ENCODE measurements at regions of chr9 and their contacts with region 1.

Region 1: GRCh38 chr9:113401027-113401792 is at the start of gene ALAD:
- DNase-seq: peak; percentile 98 to 100 (median 99)
- ATAC-seq: peak; percentile 98
- H3K4me3 ChIP-seq: peak within 1 kb of the TSS; percentile 98
- H3K4me3 Mint-ChIP-seq: peak within 1 kb of the TSS; percentile 98
- H3K27ac ChIP-seq: peak within 1 kb of the TSS; percentile 50 to 54
- H3K27ac Mint-ChIP-seq: peak within 1 kb of the TSS; percentile 86
- H3K4me1 ChIP-seq: peaks cover 33% of the 10 kb centered on the region
- H3K4me1 Mint-ChIP-seq: peaks cover 34% of the 10 kb centered on the region
- H3K27me3 ChIP-seq: no peaks in the 10 kb centered on the region
- H3K27me3 Mint-ChIP-seq: no peaks in the 10 kb centered on the region
- CTCF ChIP-seq: peak; percentile 93
- total RNA-seq, gene ALAD: 14.5 to 15.0 TPM

Region 2: GRCh38 chr9:113150670-113151611 is 250.3 kb before region 1 on chr9 and contains the start of gene SLC31A2:
- CTCF ChIA-PET with region 1: no interaction called
- POLR2A ChIA-PET with region 1: no interaction called
- intact Hi-C with region 1: loop called in 1 of 2 experiments (anchors 10 kb)
- DNase-seq: peak; percentile 68 to 92 (median 81)
- ATAC-seq: peak; percentile 95
- H3K4me3 ChIP-seq: peak within 1 kb of the TSS; percentile 90
- H3K4me3 Mint-ChIP-seq: peak within 1 kb of the TSS; percentile 88
- H3K27ac ChIP-seq: peak within 1 kb of the TSS; percentile 55 to 56
- H3K27ac Mint-ChIP-seq: peak within 1 kb of the TSS; percentile 53
- H3K4me1 ChIP-seq: peaks cover 25% of the 10 kb centered on the region
- H3K4me1 Mint-ChIP-seq: peaks cover 35% of the 10 kb centered on the region
- H3K27me3 ChIP-seq: peaks cover 2% of the 10 kb centered on the region in 2 experiments
- H3K27me3 Mint-ChIP-seq: peaks cover 6% of the 10 kb centered on the region
- CTCF ChIP-seq: peak; percentile 61
- total RNA-seq, gene SLC31A2: 4.8 to 5.4 TPM

Region 3: GRCh38 chr9:113267911-113268566 is 133.2 kb before region 1 on chr9:
- CTCF ChIA-PET with region 1: no interaction called
- POLR2A ChIA-PET with region 1: no interaction called
- intact Hi-C with region 1: no loop called
- DNase-seq: no peak
- ATAC-seq: no peak
- H3K4me3 ChIP-seq: no peak overlapping the region
- H3K4me3 Mint-ChIP-seq: no peak overlapping the region
- H3K27ac ChIP-seq: no peak overlapping the region
- H3K27ac Mint-ChIP-seq: no peak overlapping the region
- H3K4me1 ChIP-seq: no peaks in the 10 kb centered on the region
- H3K4me1 Mint-ChIP-seq: peaks cover 18% of the 10 kb centered on the region
- H3K27me3 ChIP-seq: no peaks in the 10 kb centered on the region
- H3K27me3 Mint-ChIP-seq: no peaks in the 10 kb centered on the region
- CTCF ChIP-seq: no peak

Region 4: DNA sequence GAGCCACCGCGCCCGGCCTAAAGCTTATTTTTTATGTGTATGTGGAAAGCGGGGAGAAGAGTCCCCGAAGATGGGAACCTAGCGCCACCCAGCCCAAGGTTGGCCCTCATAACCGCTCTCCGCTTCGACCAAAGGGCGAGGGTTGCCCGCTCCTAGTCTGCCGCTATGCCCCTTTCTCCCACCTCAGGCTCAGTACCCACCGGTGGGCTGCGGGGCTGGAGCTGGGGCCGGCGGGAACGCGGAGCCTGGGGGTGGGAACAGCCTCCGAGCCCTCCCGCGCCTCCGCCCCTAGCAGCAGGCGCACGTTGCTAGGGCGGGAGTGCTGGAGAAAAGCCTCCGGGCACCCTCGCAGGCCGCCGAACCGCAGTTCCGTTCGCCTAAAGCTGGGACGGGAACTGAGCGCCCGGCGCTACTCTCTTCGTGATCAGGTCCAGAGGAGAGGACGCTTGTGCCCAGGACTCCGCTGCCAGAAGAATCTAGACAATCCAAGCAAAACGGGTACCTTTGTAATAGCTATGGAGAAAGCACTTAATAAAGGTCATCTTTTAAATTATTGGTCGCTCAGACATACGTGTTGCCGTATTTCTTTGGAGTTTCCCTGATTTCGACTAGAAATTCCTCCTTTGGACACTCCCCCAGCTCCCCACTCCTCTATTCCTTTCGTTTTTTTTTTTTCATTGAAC is 61.1 kb before region 1 on chr9 and contains the start of gene WDR31:
- CTCF ChIA-PET with region 1: interaction called, 12 read pairs
- POLR2A ChIA-PET with region 1: interaction called, 3 read pairs
- intact Hi-C with region 1: loop called (anchors 2 to 10 kb)
- DNase-seq: peak; percentile 56 to 88 (median 74)
- ATAC-seq: peak; percentile 99
- H3K4me3 ChIP-seq: peak within 1 kb of the TSS; percentile 82
- H3K4me3 Mint-ChIP-seq: peak within 1 kb of the TSS; percentile 91
- H3K27ac ChIP-seq: no peak within 1 kb of the TSS
- H3K27ac Mint-ChIP-seq: peak within 1 kb of the TSS; percentile 14
- H3K4me1 ChIP-seq: peaks cover 18% of the 10 kb centered on the region
- H3K4me1 Mint-ChIP-seq: peaks cover 25% of the 10 kb centered on the region
- H3K27me3 ChIP-seq: no peaks in the 10 kb centered on the region
- H3K27me3 Mint-ChIP-seq: peaks cover 11% of the 10 kb centered on the region
- CTCF ChIP-seq: no peak
- total RNA-seq, gene WDR31: 0.14 to 0.22 TPM

Region 5: DNA sequence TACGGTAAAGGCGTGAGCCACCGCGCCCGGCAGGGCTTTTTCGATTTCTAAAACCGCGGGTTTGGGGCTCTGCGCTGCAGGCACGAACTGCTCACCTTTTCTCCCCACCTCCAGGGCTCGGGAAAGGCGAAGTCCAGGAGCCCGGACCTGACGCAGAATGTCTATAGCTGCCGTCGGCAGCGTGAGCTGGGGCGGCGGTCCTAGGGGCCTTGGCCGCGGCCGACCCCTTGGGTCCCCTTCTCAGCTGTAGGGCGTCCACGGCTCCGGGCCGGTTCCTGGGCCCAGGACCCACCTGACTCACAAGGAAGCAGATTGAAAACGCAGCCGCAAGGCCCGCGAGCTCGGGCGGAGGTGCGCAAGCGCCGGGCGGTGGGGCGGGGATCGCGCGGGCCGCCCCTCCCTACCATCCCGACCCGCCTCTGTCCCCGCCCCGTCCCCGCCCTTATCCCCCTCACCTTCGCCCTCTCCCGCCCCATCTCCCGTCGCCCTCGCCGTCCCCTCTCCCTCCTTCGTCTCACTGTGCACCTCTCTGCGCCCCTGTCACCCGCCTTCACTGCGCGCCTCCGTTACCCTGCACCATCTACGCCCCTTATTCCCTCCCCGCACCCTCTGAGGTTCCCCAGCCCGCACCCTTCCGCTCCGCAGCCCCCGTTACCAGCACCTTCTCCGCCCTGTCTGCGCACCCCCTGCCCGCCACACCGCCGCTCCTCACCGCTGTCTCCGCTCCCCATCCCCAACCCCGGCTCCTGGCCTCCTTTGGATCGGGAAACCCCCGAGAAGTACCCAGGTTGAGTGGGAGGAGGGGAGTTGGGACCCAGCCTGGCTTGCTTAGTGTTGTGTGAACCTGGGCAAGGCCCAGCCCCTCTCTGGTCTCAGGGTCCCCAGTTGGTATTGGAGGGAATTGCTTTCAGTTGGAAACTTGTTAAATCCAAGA is 24.3 kb before region 1 on chr9 and contains the start of gene HDHD3:
- CTCF ChIA-PET with region 1: interaction called, 8 read pairs
- POLR2A ChIA-PET with region 1: interaction called, 8 read pairs
- intact Hi-C with region 1: loop called in 1 of 2 experiments (anchors 1 kb)
- DNase-seq: peak; percentile 50 to 93 (median 76)
- ATAC-seq: peak; percentile 88
- H3K4me3 ChIP-seq: peak within 1 kb of the TSS; percentile 96
- H3K4me3 Mint-ChIP-seq: peak within 1 kb of the TSS; percentile 87
- H3K27ac ChIP-seq: peak within 1 kb of the TSS; percentile 59 to 65
- H3K27ac Mint-ChIP-seq: peak within 1 kb of the TSS; percentile 90
- H3K4me1 ChIP-seq: peaks cover 23% of the 10 kb centered on the region
- H3K4me1 Mint-ChIP-seq: peaks cover 21% of the 10 kb centered on the region
- H3K27me3 ChIP-seq: no peaks in the 10 kb centered on the region
- H3K27me3 Mint-ChIP-seq: no peaks in the 10 kb centered on the region
- CTCF ChIP-seq: no peak
- total RNA-seq, gene HDHD3: 12.8 to 13.2 TPM

Region 6: GRCh38 chr9:113541019-113541900 is 140.1 kb after region 1 on chr9:
- CTCF ChIA-PET with region 1: no interaction called
- POLR2A ChIA-PET with region 1: no interaction called
- intact Hi-C with region 1: no loop called
- DNase-seq: no peak
- ATAC-seq: no peak
- H3K4me3 ChIP-seq: no peak overlapping the region
- H3K4me3 Mint-ChIP-seq: no peak overlapping the region
- H3K27ac ChIP-seq: no peak overlapping the region
- H3K27ac Mint-ChIP-seq: no peak overlapping the region
- H3K4me1 ChIP-seq: peaks cover 2% of the 10 kb centered on the region
- H3K4me1 Mint-ChIP-seq: peaks cover 11% of the 10 kb centered on the region
- H3K27me3 ChIP-seq: no peaks in the 10 kb centered on the region
- H3K27me3 Mint-ChIP-seq: no peaks in the 10 kb centered on the region
- CTCF ChIP-seq: no peak

Measured in CD4-positive, alpha-beta T cell (primary cell).